ENCODE measurements at regions of chr6 and their contacts with region 1.

Region 1: DNA sequence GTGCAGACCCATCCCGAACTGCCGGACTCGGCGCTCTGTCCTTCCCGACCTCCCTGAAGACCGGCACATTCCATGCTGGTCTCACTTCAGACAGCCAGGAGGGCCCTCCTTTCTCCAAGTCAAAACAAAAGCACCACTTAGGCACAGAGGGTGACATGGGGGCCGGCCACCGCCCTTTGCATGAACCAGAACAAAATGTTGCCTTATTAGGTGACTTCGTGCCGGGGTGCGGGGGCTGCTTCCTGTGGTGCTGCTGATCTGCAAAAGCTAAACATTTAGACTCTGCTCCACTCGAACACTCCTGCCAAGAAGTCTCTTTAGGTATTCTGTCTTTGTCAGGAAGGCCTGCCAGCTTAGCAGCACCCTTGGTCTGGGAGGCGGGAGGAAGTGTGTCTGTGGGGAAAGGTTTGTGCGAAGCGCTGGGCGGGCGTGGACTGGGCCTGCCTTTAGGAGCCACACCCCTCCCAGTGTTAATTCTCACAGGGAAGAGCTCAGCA is 133.8 kb downstream of the SMOC2 start:
- DNase-seq: peak in 1 of 2 donors; percentile 32
- ATAC-seq: peak in 7 of 8 donors; percentile 52 to 76 (median 59)
- H3K4me3 ChIP-seq: no peak overlapping the region
- H3K27ac ChIP-seq: peak overlapping the region in 1 of 10 donors; percentile 19
- H3K4me1 ChIP-seq: peaks cover 0 to 12% (median 0%) of the 10 kb centered on the region in 9 donors
- H3K27me3 ChIP-seq: peaks cover 0 to 22% (median 12%) of the 10 kb centered on the region in 7 donors
- CTCF ChIP-seq: no peak

Region 2: DNA sequence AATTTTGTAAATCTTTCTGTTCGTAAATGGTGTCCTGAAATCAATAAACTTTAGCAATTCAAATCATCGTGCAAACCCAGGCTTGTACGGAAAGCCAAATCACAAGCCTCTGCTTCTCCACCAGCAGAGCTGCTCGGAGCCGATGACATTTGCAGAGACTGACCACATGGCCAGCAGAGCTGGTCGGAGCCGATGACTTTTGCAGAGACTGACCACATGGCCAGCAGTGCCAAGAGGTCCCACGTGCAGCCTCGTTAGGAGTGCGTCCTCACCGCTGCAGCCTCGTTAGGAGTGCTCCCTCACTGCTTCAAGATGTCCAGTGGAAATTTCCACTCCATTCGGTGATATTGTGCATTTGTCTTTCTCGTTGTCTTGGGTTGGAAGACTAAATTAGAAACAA is 105.2 kb before region 1 on chr6:
- intact Hi-C with region 1: loop called in 1 of 10 experiments (anchors 10 kb)
- DNase-seq: peak; percentile 74
- ATAC-seq: peak; percentile 81 to 96 (median 89)
- H3K4me3 ChIP-seq: peak overlapping the region in 1 of 10 donors; percentile 15
- H3K27ac ChIP-seq: peak overlapping the region in 2 of 10 donors; percentile 4 to 15
- H3K4me1 ChIP-seq: peaks cover 0 to 26% (median 7%) of the 10 kb centered on the region in 9 donors
- H3K27me3 ChIP-seq: peaks cover 0 to 41% (median 9%) of the 10 kb centered on the region in 7 donors
- CTCF ChIP-seq: no peak